IMR-90 (cell line): ENCODE measurements at regions of chr1 and their contacts with region 1.

Region 1: GRCh38 chr1:237864338-237865244 is 26.1 kb downstream of the ZP4 start:
- DNase-seq: no peak
- ATAC-seq: peak; percentile 79
- H3K4me3 ChIP-seq: peak overlapping the region; percentile 26; the same call in 1 of the 2 replicates
- H3K27ac ChIP-seq: no peak overlapping the region
- H3K4me1 ChIP-seq: no peaks in the 10 kb centered on the region
- H3K27me3 ChIP-seq: no peaks in the 10 kb centered on the region
- CTCF ChIP-seq: peak; percentile 67
- POLR2A ChIP-seq: no peak
- RAD21 ChIP-seq: peak; percentile 72

Region 2: DNA sequence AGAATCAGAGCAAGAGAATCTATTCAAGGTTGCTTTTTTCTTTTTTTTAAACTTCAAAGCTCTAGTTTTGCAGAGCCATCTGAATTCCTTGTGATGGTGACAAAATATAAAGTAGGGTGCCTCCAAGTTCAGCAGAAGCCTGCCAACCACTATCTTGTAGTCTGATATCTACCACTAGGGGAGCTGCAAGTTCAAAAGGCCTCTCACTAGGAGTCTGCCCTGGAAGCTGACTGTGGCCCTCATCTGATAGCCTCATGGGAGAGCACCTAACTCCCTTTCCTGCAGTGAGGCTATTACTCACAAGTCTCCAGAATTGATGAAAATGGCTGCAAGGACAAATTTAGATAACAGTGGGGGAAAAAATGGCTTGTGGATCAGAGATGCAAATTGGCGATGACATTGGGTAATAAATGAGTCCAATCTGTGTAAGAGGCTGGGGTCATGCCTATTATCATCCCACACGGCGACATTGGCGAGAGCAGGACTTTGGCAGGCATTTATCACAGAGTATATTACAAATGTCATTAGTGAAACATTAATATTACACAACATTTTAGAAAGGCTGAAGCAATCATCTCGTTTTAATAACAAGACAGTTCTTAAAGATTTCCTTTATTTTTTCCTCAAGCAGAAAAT is 36.8 kb after region 1 on chr1:
- CTCF ChIA-PET with region 1: no interaction called
- POLR2A ChIA-PET with region 1: no interaction called
- dilution Hi-C with region 1: no loop called
- in situ Hi-C with region 1: no loop called
- intact Hi-C with region 1: no loop called
- DNase-seq: no peak
- ATAC-seq: peak; percentile 59; the same call in 1 of the 2 replicates
- H3K4me3 ChIP-seq: no peak overlapping the region
- H3K27ac ChIP-seq: no peak overlapping the region
- H3K4me1 ChIP-seq: no peaks in the 10 kb centered on the region
- H3K27me3 ChIP-seq: no peaks in the 10 kb centered on the region
- CTCF ChIP-seq: 0 out of 2 replicates have a peak, but pooled peaks have one; percentile 22
- POLR2A ChIP-seq: no peak
- RAD21 ChIP-seq: no peak

Region 3: GRCh38 chr1:238438311-238439275 is 574.0 kb after region 1 on chr1:
- CTCF ChIA-PET with region 1: no interaction called
- POLR2A ChIA-PET with region 1: no interaction called
- dilution Hi-C with region 1: no loop called
- in situ Hi-C with region 1: no loop called
- intact Hi-C with region 1: loop called (anchors 10 kb)
- DNase-seq: no peak
- ATAC-seq: no peak
- H3K4me3 ChIP-seq: no peak overlapping the region
- H3K27ac ChIP-seq: no peak overlapping the region
- H3K4me1 ChIP-seq: no peaks in the 10 kb centered on the region
- H3K27me3 ChIP-seq: no peaks in the 10 kb centered on the region
- CTCF ChIP-seq: no peak
- POLR2A ChIP-seq: no peak
- RAD21 ChIP-seq: no peak